Sigmoid colon (tissue), 7 donors: ENCODE measurements at regions of chr16 and their contacts with region 1.

Region 1: DNA sequence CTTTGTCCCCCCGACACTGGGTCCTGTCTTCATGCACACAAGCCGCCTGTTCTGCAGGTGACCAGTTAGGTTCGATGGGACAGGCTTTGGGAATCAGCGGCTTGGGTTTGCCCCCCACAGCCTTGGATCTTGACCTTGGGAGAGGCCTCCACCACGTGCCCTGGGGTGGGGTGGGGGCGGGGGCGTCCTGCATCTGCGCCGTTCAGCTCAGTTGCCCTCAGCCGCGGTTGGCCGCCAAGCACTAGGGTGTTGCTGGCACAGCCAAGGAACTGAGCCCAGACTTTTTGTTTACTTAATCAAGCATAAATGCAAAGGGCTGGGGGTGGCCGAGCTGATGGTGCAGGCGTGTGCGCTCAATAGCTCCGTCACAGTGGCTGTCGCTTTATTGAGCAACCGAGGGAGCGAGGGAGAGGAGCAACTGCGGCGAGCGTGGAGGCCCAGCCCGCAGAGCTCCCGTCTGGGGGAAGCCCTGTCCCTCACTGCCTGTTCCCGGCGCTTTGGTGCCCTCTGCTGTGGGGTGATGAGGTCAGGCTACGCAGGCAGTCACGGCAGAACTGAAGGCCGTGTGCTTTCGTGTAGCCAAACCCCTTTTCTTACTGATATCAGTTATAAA is 33.9 kb downstream of the JPH3 start:
- DNase-seq: peak; percentile 89
- H3K4me3 ChIP-seq: peak overlapping the region in 1 of 4 donors; percentile 10
- H3K27ac ChIP-seq: no peak overlapping the region
- H3K4me1 ChIP-seq: peaks cover 0 to 16% (median 13%) of the 10 kb centered on the region in 4 donors
- H3K27me3 ChIP-seq: peaks cover 0 to 38% (median 10%) of the 10 kb centered on the region in 3 donors
- CTCF ChIP-seq: peak; percentile 23 to 58 (median 42)
- EP300 ChIP-seq: no peak
- POLR2A ChIP-seq: no peak

Region 2: GRCh38 chr16:87288753-87289362 is 347.3 kb before region 1 on chr16:
- intact Hi-C with region 1: no loop called
- DNase-seq: no peak
- H3K4me3 ChIP-seq: no peak overlapping the region
- H3K27ac ChIP-seq: no peak overlapping the region
- H3K4me1 ChIP-seq: no peaks in the 10 kb centered on the region
- H3K27me3 ChIP-seq: no peaks in the 10 kb centered on the region
- CTCF ChIP-seq: no peak
- EP300 ChIP-seq: no peak
- POLR2A ChIP-seq: no peak

Region 3: GRCh38 chr16:87416826-87417527 is 219.2 kb before region 1 on chr16:
- intact Hi-C with region 1: loop called (anchors 5 kb)
- DNase-seq: peak; percentile 69
- H3K4me3 ChIP-seq: no peak overlapping the region
- H3K27ac ChIP-seq: no peak overlapping the region
- H3K4me1 ChIP-seq: no peaks in the 10 kb centered on the region
- H3K27me3 ChIP-seq: no peaks in the 10 kb centered on the region
- CTCF ChIP-seq: peak; percentile 10 to 54 (median 40)
- EP300 ChIP-seq: no peak
- POLR2A ChIP-seq: no peak

Region 4: GRCh38 chr16:87550496-87550961 is 85.6 kb before region 1 on chr16:
- intact Hi-C with region 1: loop called (anchors 2 kb)
- DNase-seq: no peak
- H3K4me3 ChIP-seq: no peak overlapping the region
- H3K27ac ChIP-seq: no peak overlapping the region
- H3K4me1 ChIP-seq: peaks cover 0 to 4% (median 0%) of the 10 kb centered on the region in 4 donors
- H3K27me3 ChIP-seq: peaks cover 0 to 7% (median 0%) of the 10 kb centered on the region in 3 donors
- CTCF ChIP-seq: peak; percentile 51 to 93 (median 72)
- EP300 ChIP-seq: no peak
- POLR2A ChIP-seq: no peak

Region 5: GRCh38 chr16:87587636-87588035 is 48.5 kb before region 1 on chr16:
- intact Hi-C with region 1: loop called (anchors 2 kb)
- DNase-seq: no peak
- H3K4me3 ChIP-seq: no peak overlapping the region
- H3K27ac ChIP-seq: no peak overlapping the region
- H3K4me1 ChIP-seq: peaks cover 0 to 19% (median 9%) of the 10 kb centered on the region in 4 donors
- H3K27me3 ChIP-seq: peaks cover 0 to 50% (median 5%) of the 10 kb centered on the region in 3 donors
- CTCF ChIP-seq: no peak
- EP300 ChIP-seq: no peak
- POLR2A ChIP-seq: no peak

Region 6: DNA sequence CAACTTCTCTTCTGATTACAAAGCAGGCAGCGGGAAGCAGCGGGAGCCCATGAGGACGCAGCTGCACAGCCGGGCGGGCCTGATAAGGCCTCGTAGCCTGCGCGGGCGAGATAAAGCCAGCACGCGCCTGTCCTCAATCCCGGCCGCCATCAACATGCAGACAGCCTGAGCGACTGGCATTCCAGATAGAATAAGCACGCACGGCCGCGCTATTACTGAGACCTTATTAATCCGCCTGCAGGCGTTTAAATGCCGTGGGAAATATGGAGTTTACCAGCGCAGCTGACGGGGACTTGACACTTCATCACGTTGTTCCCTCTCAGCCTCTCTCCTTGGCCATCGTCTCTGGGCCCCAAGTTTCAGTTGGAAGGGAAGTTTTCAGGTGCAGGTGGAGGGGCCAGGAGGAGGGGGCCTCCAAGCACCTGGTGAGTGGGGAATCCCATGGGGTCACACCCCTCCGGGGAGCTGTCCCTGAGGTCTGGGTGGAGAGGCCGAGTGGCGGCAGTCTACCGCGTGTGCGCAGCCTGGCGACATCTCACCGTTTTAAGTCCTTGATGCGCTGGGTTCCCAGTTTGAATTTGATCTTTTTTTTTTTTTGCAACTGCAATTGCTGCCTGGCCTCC is 1368.1 kb after region 1 on chr16:
- intact Hi-C with region 1: no loop called
- DNase-seq: no peak
- H3K4me3 ChIP-seq: no peak overlapping the region
- H3K27ac ChIP-seq: no peak overlapping the region
- H3K4me1 ChIP-seq: no peaks in the 10 kb centered on the region
- H3K27me3 ChIP-seq: peaks cover 7 to 71% (median 53%) of the 10 kb centered on the region in 3 donors
- CTCF ChIP-seq: no peak
- EP300 ChIP-seq: no peak
- POLR2A ChIP-seq: no peak